WTC11 (cell line): ENCODE measurements at regions of chr2 and their contacts with region 1.

Region 1: DNA sequence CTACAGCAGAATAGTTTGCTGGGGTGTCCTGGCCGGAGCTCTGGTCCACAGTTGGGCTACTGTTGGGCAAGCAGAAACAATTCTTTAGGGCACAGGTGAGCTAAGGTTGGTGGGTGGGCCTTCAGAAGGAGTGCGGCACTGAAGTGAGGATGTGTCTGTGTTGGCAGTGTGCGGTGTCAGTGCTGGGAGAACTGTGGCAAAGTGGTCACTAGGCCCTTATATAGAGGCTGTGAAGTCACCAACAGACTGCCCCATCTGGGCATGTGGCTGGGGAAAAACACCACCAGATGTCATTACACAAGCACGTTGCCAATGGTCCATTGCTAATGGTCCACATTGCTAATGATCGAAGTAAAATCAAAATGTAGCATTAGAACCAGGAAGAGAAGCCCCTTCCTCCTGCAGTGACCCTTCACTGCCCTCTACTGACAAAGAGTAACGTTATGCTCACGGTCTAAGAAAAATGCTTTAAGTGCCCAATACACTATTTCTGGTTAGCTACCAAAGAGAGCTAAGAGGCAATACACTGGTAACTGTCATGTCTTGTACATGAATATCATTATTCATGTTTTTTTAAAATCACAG is 21.3 kb downstream of the SCN1A start:
- DNase-seq: no peak
- ATAC-seq: peak; percentile 97
- H3K4me3 Mint-ChIP-seq: no peak overlapping the region
- H3K27ac Mint-ChIP-seq: no peak overlapping the region
- H3K4me1 Mint-ChIP-seq: no peaks in the 10 kb centered on the region
- H3K27me3 Mint-ChIP-seq: no peaks in the 10 kb centered on the region
- CTCF ChIP-seq: peak; percentile 41; the same call in 1 of the 2 replicates

Region 2: DNA sequence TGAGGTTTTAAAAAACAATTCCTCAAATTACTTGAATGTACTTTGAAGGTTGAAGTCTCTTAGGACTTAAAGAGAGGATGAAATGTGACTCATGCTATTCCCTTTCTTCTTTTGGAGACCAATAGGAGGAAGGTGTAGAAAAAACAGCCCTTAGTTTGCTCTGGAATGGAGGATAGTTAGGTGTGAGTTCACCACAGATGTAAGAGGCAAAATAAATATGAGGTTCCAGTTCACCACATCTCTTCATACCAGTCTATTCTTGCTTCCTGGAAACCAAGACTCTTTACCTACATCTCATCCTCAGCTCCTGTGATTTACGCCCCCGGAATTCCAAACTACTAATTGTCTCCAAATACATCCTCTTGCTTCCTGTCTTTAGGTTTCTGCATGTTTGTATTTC is 75.5 kb before region 1 on chr2:
- CTCF ChIA-PET with region 1: no interaction called
- POLR2A ChIA-PET with region 1: no interaction called
- DNase-seq: no peak
- ATAC-seq: no peak
- H3K4me3 Mint-ChIP-seq: no peak overlapping the region
- H3K27ac Mint-ChIP-seq: no peak overlapping the region
- H3K4me1 Mint-ChIP-seq: no peaks in the 10 kb centered on the region
- H3K27me3 Mint-ChIP-seq: no peaks in the 10 kb centered on the region
- CTCF ChIP-seq: no peak

Region 3: GRCh38 chr2:166057370-166058164 is 49.0 kb before region 1 on chr2:
- CTCF ChIA-PET with region 1: interaction called, 15 read pairs
- POLR2A ChIA-PET with region 1: no interaction called
- DNase-seq: no peak
- ATAC-seq: no peak
- H3K4me3 Mint-ChIP-seq: no peak overlapping the region
- H3K27ac Mint-ChIP-seq: no peak overlapping the region
- H3K4me1 Mint-ChIP-seq: no peaks in the 10 kb centered on the region
- H3K27me3 Mint-ChIP-seq: no peaks in the 10 kb centered on the region
- CTCF ChIP-seq: peak; percentile 44; the same call in 1 of the 2 replicates

Region 4: DNA sequence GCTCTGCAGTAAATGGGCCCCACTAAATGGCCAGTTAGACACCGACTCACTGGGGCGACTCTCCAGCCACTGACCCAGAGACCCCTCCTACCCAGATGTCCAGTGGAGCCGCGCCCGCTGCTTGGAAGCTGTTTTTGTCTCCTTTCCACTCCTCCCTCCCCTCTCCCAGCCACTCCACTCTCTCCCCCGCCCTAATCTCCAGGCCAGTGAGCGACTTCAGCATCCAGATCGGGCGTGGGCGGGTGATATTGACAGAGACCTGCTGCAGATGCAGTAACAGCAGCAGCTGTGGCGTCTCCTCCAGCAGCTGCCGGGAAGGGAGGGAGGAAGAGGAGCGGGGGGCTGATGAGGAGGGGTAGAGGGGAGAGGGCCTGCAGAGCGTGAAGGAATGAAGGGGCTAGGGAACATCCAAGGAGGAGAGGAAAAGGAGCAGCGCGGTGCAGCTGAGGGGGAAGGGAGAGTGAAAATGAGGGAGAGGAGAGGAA is 387.7 kb after region 1 on chr2 and contains the start of gene SCN7A:
- CTCF ChIA-PET with region 1: no interaction called
- POLR2A ChIA-PET with region 1: no interaction called
- DNase-seq: peak; percentile 61
- ATAC-seq: peak; percentile 91
- H3K4me3 Mint-ChIP-seq: peak within 1 kb of the TSS; percentile 79
- H3K27ac Mint-ChIP-seq: no peak within 1 kb of the TSS
- H3K4me1 Mint-ChIP-seq: peaks cover 10% of the 10 kb centered on the region
- H3K27me3 Mint-ChIP-seq: peaks cover 18% of the 10 kb centered on the region
- CTCF ChIP-seq: no peak
- total RNA-seq, gene SCN7A: 0.14 to 0.32 TPM (median 0.17 TPM) in 3 replicates